Natural killer cell (primary cell): ENCODE measurements at regions of chr12 and their contacts with region 1.

Region 1: GRCh38 chr12:6140651-6141447 is 16.4 kb upstream of the VWF start:
- DNase-seq: peak in 1 of 2 donors; percentile 62
- ATAC-seq: peak; percentile 19 to 71 (median 25)
- H3K4me3 ChIP-seq: no peak overlapping the region
- H3K4me3 Mint-ChIP-seq: peak overlapping the region; percentile 40
- H3K27ac ChIP-seq: peak overlapping the region; percentile 59
- H3K27ac Mint-ChIP-seq: peak overlapping the region; percentile 67 to 74
- H3K4me1 ChIP-seq: peaks cover 22% of the 10 kb centered on the region
- H3K4me1 Mint-ChIP-seq: peaks cover 13 to 25% of the 10 kb centered on the region in 2 donors
- H3K27me3 ChIP-seq: no peaks in the 10 kb centered on the region
- H3K27me3 Mint-ChIP-seq: peaks cover 0 to 7% of the 10 kb centered on the region in 2 donors
- CTCF ChIP-seq: no peak

Region 2: DNA sequence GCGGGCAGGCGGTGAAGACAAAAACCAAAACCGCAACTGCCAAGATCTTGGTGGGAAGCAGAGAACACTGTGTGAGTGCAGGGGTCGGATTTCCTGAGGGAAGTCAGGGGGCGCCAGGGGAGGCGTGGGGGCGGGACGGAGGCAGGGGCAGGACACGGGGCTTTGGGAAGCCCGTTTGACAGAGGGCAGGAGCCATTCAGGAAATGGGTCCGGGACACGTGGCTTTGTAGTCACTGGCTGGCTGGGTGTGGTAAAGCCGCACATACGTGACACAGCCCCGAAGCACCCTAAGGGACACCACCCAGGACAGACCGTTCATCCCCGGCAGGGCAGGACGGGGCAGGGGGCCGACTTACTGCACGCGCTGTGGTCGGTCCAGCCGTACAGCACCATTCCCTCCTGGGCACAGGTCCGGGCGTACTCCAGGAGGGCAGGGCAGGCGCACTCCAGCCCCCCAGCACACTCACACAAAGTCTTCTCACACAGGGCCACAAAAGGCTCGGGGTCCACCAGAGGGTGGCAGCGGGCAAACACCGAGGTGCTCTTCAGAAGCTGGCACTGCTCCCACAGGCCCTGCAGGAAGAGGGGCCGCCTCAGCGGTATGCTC is 65.8 kb before region 1 on chr12:
- intact Hi-C with region 1: loop called (anchors 5 kb)
- DNase-seq: peak; percentile 36 to 60
- ATAC-seq: peak; percentile 65 to 76 (median 69)
- H3K4me3 ChIP-seq: peak overlapping the region; percentile 29
- H3K4me3 Mint-ChIP-seq: peak overlapping the region; percentile 96
- H3K27ac ChIP-seq: no peak overlapping the region
- H3K27ac Mint-ChIP-seq: peak overlapping the region; percentile 71 to 73
- H3K4me1 ChIP-seq: peaks cover 22% of the 10 kb centered on the region
- H3K4me1 Mint-ChIP-seq: peaks cover 27 to 29% of the 10 kb centered on the region in 2 donors
- H3K27me3 ChIP-seq: peaks cover 7% of the 10 kb centered on the region
- H3K27me3 Mint-ChIP-seq: peaks cover 34 to 44% of the 10 kb centered on the region in 2 donors
- CTCF ChIP-seq: no peak